Activated B cell treated with CpG ODN at 0.5 μM for 24 hours (primary cell): ENCODE measurements at regions of chr14 and their contacts with region 1.

Region 1: DNA sequence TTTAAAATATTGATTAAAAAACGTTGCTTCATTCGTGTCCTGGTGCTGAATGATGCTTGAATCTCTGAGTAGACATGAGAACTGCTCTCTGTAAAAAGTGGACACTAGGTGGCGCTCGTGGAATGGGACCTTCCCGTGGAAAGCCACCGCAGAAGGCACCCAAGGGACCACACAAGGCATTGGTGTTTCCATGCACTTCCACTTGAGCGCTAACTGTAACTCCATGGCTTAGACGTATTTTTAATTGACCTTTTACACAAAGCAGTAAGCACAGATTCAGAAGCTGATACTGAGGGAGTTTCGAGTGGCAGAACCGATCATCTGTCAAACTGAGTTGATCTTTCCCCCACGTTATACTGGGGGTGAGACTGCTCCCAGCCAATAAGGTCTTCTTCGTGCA is 135.3 kb downstream of the PRKCH start:
- DNase-seq: peak; percentile 55
- ATAC-seq: peak; percentile 89
- H3K4me3 Mint-ChIP-seq: no peak overlapping the region
- H3K27ac Mint-ChIP-seq: no peak overlapping the region
- H3K4me1 Mint-ChIP-seq: peaks cover 9% of the 10 kb centered on the region
- H3K27me3 Mint-ChIP-seq: no peaks in the 10 kb centered on the region
- CTCF ChIP-seq: no peak

Region 2: GRCh38 chr14:61296719-61297502 is 159.8 kb before region 1 on chr14:
- CTCF ChIA-PET with region 1: interaction called, 3 read pairs
- POLR2A ChIA-PET with region 1: no interaction called
- intact Hi-C with region 1: loop called (anchors 1 kb)
- DNase-seq: no peak
- ATAC-seq: no peak
- H3K4me3 Mint-ChIP-seq: no peak overlapping the region
- H3K27ac Mint-ChIP-seq: no peak overlapping the region
- H3K4me1 Mint-ChIP-seq: no peaks in the 10 kb centered on the region
- H3K27me3 Mint-ChIP-seq: no peaks in the 10 kb centered on the region
- CTCF ChIP-seq: no peak